ENCODE measurements at regions of chr7 and their contacts with region 1.

Region 1: GRCh38 chr7:85890244-85890811 is 703.5 kb upstream of the SEMA3D start:
- H3K4me3 ChIP-seq: no peak overlapping the region
- H3K27ac ChIP-seq: no peak overlapping the region
- H3K4me1 ChIP-seq: no peaks in the 10 kb centered on the region
- CTCF ChIP-seq: no peak

Region 2: DNA sequence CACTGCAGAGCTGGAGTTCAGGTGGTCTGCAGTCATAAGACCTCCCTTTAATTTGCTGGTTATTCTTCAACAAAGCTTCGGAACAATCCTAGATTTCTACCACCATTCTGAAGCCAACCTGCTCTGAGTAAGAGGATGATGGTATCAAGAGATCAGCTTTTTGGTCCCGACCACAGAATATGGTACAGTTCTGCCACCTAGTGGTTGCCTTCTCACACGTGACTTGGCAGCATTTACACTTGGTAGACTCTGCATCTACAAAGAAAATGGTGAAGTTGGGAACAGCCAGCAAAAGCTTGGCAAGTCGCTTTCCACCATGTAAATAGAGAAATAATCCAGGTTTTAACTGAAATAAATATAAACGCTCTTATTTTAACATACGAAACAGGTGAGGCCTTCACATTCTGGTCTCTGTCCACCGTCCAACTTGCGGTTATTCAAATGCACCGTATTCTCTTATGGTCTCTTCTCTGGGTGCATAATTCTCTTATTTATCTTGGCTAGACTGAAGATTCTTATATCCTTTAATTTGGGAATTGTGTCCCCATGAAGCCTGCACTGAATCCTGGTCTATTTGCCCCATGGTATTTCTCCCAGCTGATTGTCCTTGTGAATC is 579.5 kb after region 1 on chr7:
- CTCF ChIA-PET with region 1: interaction called, 34 read pairs
- POLR2A ChIA-PET with region 1: no interaction called
- H3K4me3 ChIP-seq: no peak overlapping the region
- H3K27ac ChIP-seq: no peak overlapping the region
- H3K4me1 ChIP-seq: peaks cover 7% of the 10 kb centered on the region; the same call in 1 of the 2 replicates
- CTCF ChIP-seq: peak; percentile 57; the same call in 1 of the 2 replicates